ENCODE measurements at regions of chr2 and their contacts with region 1.

Region 1: GRCh38 chr2:61832183-61832841 is 21.5 kb downstream of the FAM161A start:
- DNase-seq: no peak
- ATAC-seq: no peak
- H3K4me3 Mint-ChIP-seq: no peak overlapping the region
- H3K27ac Mint-ChIP-seq: no peak overlapping the region
- H3K4me1 Mint-ChIP-seq: no peaks in the 10 kb centered on the region
- H3K27me3 Mint-ChIP-seq: no peaks in the 10 kb centered on the region
- CTCF ChIP-seq: no peak

Region 2: GRCh38 chr2:62071126-62071598 is 238.8 kb after region 1 on chr2:
- CTCF ChIA-PET with region 1: no interaction called
- POLR2A ChIA-PET with region 1: interaction called, 10 read pairs
- intact Hi-C with region 1: no loop called
- DNase-seq: no peak
- ATAC-seq: no peak
- H3K4me3 Mint-ChIP-seq: no peak overlapping the region
- H3K27ac Mint-ChIP-seq: no peak overlapping the region
- H3K4me1 Mint-ChIP-seq: peaks cover 3% of the 10 kb centered on the region
- H3K27me3 Mint-ChIP-seq: no peaks in the 10 kb centered on the region
- CTCF ChIP-seq: no peak